Activated B cell treated with CpG ODN at 0.5 μM for 24 hours (primary cell): ENCODE measurements at regions of chr3 and their contacts with region 1.

Region 1: DNA sequence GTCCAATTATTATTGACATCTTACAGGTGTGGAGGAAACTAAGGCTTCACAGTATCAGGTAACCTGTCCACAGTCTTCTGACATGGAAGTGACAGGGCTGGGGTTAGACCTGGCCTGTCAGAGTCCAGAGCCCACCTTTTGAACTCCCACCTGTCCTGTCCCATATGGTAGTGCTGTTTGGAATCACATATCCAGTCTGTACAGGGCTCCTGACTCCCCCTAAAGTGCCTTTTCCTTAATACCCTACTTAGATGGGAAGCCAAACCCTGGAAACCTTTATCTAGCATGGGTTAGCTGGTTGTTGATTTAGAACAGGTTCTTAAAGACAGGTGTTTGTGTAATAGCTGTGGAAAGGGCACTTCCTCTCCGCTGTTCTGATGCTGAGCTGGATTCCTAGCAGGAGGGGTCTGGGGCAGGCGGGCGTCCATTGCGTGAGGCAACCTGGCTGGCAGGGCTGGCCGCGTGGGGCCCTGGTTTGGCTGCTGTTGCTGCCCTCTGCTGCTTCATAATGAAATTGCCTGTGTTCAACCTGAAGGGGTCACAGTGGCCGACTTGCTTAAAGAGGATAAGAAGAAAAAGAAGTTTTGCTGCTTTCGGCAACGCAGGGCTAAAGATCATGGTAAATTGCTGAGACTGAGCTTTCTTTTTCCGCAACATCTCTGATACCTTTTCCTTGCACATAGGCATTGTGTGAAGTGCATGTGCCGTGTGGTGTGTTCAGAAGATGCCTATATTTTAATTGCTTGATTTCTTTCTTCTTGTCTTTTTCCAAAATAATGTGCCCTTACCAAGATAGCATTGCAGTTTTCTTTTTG is 136.2 kb downstream of the CHDH start:
- DNase-seq: peak; percentile 44
- ATAC-seq: peak; percentile 80
- H3K4me3 Mint-ChIP-seq: no peak overlapping the region
- H3K27ac Mint-ChIP-seq: no peak overlapping the region
- H3K4me1 Mint-ChIP-seq: peaks cover 15% of the 10 kb centered on the region
- H3K27me3 Mint-ChIP-seq: no peaks in the 10 kb centered on the region
- CTCF ChIP-seq: peak; percentile 23

Region 2: DNA sequence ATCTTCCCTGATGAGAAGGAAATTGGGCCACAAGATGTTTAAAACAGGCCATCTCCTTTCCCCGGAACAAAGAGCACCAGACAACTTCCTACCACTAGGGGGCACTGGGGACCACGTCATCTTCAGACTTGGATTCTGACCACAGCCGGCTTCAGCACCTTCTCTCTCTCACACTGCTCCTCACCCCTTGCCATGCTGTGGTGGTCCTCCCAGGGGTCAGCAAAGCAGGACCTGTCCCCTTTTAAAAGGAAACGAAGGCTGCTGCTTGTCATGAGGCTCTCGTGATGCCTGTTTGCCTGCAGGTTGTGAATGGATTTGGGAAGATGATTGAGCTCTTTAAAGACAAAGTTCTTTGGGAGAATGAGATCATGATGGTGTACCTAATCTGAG is 596.1 kb before region 1 on chr3:
- CTCF ChIA-PET with region 1: interaction called, 5 read pairs
- POLR2A ChIA-PET with region 1: no interaction called
- intact Hi-C with region 1: loop called (anchors 1 kb)
- DNase-seq: peak; percentile 62
- ATAC-seq: peak; percentile 96
- H3K4me3 Mint-ChIP-seq: no peak overlapping the region
- H3K27ac Mint-ChIP-seq: no peak overlapping the region
- H3K4me1 Mint-ChIP-seq: no peaks in the 10 kb centered on the region
- H3K27me3 Mint-ChIP-seq: no peaks in the 10 kb centered on the region
- CTCF ChIP-seq: no peak

Region 3: DNA sequence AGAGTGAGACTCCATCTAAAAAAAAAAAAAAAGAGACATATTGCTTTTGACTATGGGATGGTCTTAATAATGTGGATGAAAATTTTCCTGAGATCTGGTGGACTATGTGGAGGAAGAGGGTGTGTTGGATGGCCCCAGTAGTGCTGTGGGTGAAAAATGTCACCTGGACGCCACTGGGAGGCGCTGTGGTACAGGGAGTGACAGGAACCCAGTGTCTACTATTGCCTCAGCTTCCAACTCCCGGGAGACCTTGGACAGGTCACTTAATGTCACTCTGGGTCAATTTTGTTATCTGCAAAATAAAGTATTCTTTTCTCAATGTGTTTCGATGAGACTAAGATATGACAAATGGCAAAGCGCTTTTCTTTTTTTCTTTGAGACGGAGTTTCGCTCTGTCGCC is 335.0 kb before region 1 on chr3:
- CTCF ChIA-PET with region 1: interaction called, 7 read pairs
- POLR2A ChIA-PET with region 1: no interaction called
- intact Hi-C with region 1: loop called (anchors 1 kb)
- DNase-seq: peak; percentile 29
- ATAC-seq: peak; percentile 42
- H3K4me3 Mint-ChIP-seq: no peak overlapping the region
- H3K27ac Mint-ChIP-seq: no peak overlapping the region
- H3K4me1 Mint-ChIP-seq: no peaks in the 10 kb centered on the region
- H3K27me3 Mint-ChIP-seq: peaks cover 25% of the 10 kb centered on the region
- CTCF ChIP-seq: no peak

Region 4: DNA sequence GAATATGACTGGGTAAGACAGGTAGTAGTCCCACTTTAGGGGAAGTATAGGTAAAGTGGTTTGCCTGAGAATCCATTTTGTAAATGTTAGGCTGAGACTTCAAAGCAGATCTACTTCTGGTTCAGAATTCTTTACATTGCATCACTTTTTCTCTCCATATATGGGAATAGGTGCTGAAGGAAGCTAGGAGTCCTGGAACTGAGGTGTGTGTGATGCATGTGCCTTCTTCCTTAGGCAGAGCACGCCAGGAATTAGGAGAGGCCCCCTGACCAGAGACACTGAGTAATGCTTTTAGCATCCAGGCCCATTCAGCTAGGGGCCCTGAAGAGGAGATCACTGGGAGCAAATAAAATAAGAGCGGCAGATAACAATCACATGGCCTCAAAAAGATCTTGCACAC is 293.5 kb before region 1 on chr3:
- CTCF ChIA-PET with region 1: no interaction called
- POLR2A ChIA-PET with region 1: no interaction called
- intact Hi-C with region 1: no loop called
- DNase-seq: no peak
- ATAC-seq: no peak
- H3K4me3 Mint-ChIP-seq: no peak overlapping the region
- H3K27ac Mint-ChIP-seq: no peak overlapping the region
- H3K4me1 Mint-ChIP-seq: no peaks in the 10 kb centered on the region
- H3K27me3 Mint-ChIP-seq: peaks cover 2% of the 10 kb centered on the region
- CTCF ChIP-seq: no peak

Region 5: DNA sequence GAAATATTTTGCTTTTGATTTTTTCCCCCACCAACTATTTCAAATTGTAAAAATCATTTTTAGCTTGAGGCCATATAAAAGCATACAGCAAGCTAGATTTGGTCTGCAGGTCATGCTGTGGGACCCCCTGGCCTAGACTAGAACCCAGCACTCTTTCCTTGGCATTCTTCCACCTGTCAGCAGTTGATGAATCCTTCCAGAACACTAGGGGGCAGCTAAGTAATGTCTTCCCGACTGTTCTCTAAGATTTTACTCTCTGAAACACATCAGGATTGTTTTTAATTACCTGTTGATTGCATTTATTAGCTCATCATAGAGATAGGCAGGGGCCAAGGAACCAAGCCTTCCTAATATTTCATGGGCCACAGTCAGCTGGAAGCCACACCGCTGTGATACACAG is 41.2 kb before region 1 on chr3:
- CTCF ChIA-PET with region 1: no interaction called
- POLR2A ChIA-PET with region 1: no interaction called
- intact Hi-C with region 1: loop called (anchors 2 kb)
- DNase-seq: no peak
- ATAC-seq: no peak
- H3K4me3 Mint-ChIP-seq: no peak overlapping the region
- H3K27ac Mint-ChIP-seq: no peak overlapping the region
- H3K4me1 Mint-ChIP-seq: no peaks in the 10 kb centered on the region
- H3K27me3 Mint-ChIP-seq: peaks cover 6% of the 10 kb centered on the region
- CTCF ChIP-seq: no peak

Region 6: GRCh38 chr3:53748512-53749271 is 38.6 kb after region 1 on chr3:
- CTCF ChIA-PET with region 1: interaction called, 3 read pairs
- POLR2A ChIA-PET with region 1: no interaction called
- intact Hi-C with region 1: loop called (anchors 2 kb)
- DNase-seq: peak; percentile 27
- ATAC-seq: peak; percentile 81
- H3K4me3 Mint-ChIP-seq: peak overlapping the region; percentile 72
- H3K27ac Mint-ChIP-seq: peak overlapping the region; percentile 94
- H3K4me1 Mint-ChIP-seq: peaks cover 68% of the 10 kb centered on the region
- H3K27me3 Mint-ChIP-seq: no peaks in the 10 kb centered on the region
- CTCF ChIP-seq: no peak